PC-3 (cell line): ENCODE measurements at regions of chr7 and their contacts with region 1.

Region 1: GRCh38 chr7:7761340-7761980 is 43.1 kb upstream of the RPA3 start:
- DNase-seq: peak; percentile 73
- ATAC-seq: peak; percentile 14
- H3K4me3 ChIP-seq: peak overlapping the region; percentile 68
- H3K27ac ChIP-seq: peak overlapping the region; percentile 86
- H3K4me1 ChIP-seq: peaks cover 35% of the 10 kb centered on the region
- H3K27me3 ChIP-seq: no peaks in the 10 kb centered on the region
- CTCF ChIP-seq: peak; percentile 67; the same call in 1 of the 2 replicates

Region 2: GRCh38 chr7:7438851-7439250 is 322.6 kb before region 1 on chr7:
- CTCF ChIA-PET with region 1: no interaction called
- POLR2A ChIA-PET with region 1: no interaction called
- intact Hi-C with region 1: loop called (anchors 10 kb)
- DNase-seq: peak; percentile 97
- ATAC-seq: peak; percentile 99
- H3K4me3 ChIP-seq: no peak overlapping the region
- H3K27ac ChIP-seq: peak overlapping the region; percentile 74
- H3K4me1 ChIP-seq: peaks cover 38% of the 10 kb centered on the region
- H3K27me3 ChIP-seq: no peaks in the 10 kb centered on the region
- CTCF ChIP-seq: no peak

Region 3: GRCh38 chr7:7681179-7681935 is 80.1 kb before region 1 on chr7:
- CTCF ChIA-PET with region 1: interaction called, 9 read pairs
- POLR2A ChIA-PET with region 1: interaction called, 4 read pairs
- intact Hi-C with region 1: loop called (anchors 1 kb)
- DNase-seq: peak; percentile 80
- ATAC-seq: peak; percentile 93
- H3K4me3 ChIP-seq: peak overlapping the region; percentile 16; the same call in 1 of the 2 replicates
- H3K27ac ChIP-seq: no peak overlapping the region
- H3K4me1 ChIP-seq: peaks cover 11% of the 10 kb centered on the region
- H3K27me3 ChIP-seq: no peaks in the 10 kb centered on the region
- CTCF ChIP-seq: peak; percentile 81

Region 4: DNA sequence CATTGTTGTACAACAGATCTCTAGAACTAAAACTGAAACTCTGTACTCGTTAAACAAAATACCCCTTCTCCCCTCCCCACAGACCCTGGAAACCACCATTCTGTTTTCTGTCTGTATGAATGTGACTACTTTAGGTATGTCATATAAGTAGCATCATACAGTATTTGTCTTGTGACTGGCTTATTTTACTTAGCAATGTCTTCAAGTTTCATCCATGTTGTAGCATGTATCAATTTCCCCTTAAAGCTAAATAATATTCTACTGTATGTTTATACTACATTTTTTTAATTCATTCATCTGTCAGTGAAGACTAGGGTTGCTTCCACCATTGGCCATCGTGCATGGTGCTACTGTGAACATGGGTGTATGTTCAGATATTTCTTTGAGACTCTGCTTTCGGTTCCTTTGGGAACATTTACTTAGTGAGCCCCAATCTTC is 28.1 kb after region 1 on chr7:
- CTCF ChIA-PET with region 1: no interaction called
- POLR2A ChIA-PET with region 1: no interaction called
- intact Hi-C with region 1: no loop called
- DNase-seq: no peak
- ATAC-seq: no peak
- H3K4me3 ChIP-seq: no peak overlapping the region
- H3K27ac ChIP-seq: no peak overlapping the region
- H3K4me1 ChIP-seq: peaks cover 13% of the 10 kb centered on the region
- H3K27me3 ChIP-seq: no peaks in the 10 kb centered on the region
- CTCF ChIP-seq: no peak

Region 5: DNA sequence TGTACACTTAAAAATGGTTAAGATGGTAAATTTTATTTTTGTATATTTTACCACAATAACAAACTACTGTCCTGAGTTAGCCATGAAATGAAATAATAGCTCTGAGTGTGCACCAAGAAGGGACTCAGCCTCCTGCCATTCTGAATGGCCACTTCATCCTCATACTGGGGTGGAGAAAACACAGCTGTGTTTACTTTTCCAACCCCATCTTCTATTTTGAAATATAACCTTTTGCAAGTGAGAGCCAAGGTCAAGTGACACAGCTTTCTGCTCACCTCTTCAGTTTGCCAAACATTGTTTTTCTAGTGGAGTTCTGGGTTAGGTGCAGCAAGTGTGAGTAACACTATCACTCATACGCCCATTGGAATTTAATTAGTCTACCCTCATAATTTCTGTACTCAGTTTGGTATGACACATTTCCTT is 99.8 kb after region 1 on chr7:
- CTCF ChIA-PET with region 1: interaction called, 3 read pairs
- POLR2A ChIA-PET with region 1: no interaction called
- intact Hi-C with region 1: loop called (anchors 1 kb)
- DNase-seq: peak; percentile 86
- ATAC-seq: peak; percentile 97
- H3K4me3 ChIP-seq: no peak overlapping the region
- H3K27ac ChIP-seq: peak overlapping the region; percentile 42
- H3K4me1 ChIP-seq: peaks cover 27% of the 10 kb centered on the region
- H3K27me3 ChIP-seq: no peaks in the 10 kb centered on the region
- CTCF ChIP-seq: no peak

Region 6: DNA sequence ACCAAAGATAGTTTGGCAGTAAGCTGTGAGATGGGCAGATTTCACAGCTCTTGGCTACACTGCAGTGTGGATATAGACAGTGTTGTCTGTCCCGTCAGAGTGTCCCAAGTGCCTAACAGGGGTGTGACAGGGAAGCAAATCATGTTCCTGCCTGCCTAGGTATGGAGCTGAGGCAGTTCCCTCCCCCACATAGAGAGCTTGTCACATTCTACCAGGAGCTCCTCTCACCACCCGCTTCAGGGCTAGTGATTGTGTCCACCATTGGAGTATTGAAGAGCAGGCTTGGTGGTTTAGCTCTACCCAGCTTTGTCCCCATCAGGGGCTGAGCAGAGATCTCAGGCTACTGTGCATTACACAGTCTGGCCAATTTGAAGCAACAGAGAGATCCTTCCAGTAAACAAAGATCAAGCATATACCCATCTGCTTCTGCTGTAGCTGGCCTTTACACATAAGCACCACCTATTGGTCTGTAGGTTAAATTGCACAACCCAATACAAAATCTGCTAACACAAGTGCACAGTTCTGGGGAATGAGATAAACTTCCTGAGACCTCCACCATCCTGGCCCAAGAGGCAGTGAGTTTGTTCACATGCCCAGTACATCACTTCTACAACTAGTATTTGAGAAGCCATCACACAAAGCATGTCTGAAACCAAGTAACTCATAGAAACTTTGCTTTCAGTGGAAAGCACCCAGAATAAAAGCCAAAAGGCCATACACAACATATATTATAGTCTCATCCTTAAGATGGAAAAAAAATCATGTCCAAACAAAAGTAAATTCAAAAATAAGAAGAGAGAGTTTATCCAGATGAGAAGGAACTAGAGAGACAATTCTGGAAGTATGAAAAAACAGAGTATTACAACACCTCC is 274.4 kb after region 1 on chr7:
- CTCF ChIA-PET with region 1: interaction called, 4 read pairs
- POLR2A ChIA-PET with region 1: no interaction called
- intact Hi-C with region 1: loop called (anchors 2 kb)
- DNase-seq: peak; percentile 41
- ATAC-seq: peak; percentile 95
- H3K4me3 ChIP-seq: no peak overlapping the region
- H3K27ac ChIP-seq: no peak overlapping the region
- H3K4me1 ChIP-seq: 0 out of 2 replicates have a peak, but pooled peaks cover 8% of the 10 kb centered on the region
- H3K27me3 ChIP-seq: no peaks in the 10 kb centered on the region
- CTCF ChIP-seq: peak; percentile 74

Region 7: DNA sequence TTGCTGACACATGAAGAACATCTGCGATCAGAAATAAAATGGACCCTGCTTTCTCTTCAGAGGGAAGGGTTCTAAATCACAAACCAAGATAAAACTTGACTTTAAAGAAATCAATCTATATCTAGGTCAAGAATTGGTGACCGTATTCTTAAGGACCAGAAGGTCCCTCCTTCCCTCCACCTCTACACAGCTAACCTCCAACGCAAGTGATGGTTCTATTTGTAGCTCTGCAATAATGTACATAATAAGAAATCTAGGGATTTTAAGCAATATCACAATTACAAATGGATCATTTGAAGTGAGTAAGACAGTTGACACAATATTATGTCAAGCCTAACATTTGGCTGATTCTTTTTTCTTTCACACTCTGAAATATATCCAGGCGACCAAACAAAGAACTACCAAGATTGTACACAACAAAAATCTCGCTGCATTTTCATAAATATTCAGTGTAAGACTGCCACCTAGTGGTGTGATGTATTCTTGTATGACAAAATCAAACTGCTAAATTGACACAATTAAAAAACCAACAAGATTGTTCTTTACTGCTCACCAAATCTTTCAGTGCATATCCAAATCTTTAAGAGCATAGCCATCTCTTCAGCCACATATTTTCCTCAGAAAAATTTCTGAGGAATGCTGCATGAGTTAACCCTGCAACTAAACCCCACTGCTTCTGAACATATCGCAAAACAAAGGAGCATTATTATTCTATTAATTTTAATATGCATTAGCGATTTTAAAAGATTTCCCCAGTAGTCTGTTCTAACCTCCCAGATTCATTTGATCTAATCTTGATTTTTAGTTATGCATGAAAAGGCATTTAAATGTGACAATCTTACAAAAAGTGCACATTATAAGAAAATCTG is 456.0 kb after region 1 on chr7:
- CTCF ChIA-PET with region 1: no interaction called
- POLR2A ChIA-PET with region 1: no interaction called
- intact Hi-C with region 1: loop called (anchors 5 kb)
- DNase-seq: peak; percentile 80
- ATAC-seq: peak; percentile 46
- H3K4me3 ChIP-seq: no peak overlapping the region
- H3K27ac ChIP-seq: no peak overlapping the region
- H3K4me1 ChIP-seq: no peaks in the 10 kb centered on the region
- H3K27me3 ChIP-seq: no peaks in the 10 kb centered on the region
- CTCF ChIP-seq: peak; percentile 75